Activated CD4-positive, alpha-beta T cell treated with anti-CD3 and anti-CD28 coated beads for 36 hours (primary cell): ENCODE measurements at regions of chr16 and their contacts with region 1.

Region 1: DNA sequence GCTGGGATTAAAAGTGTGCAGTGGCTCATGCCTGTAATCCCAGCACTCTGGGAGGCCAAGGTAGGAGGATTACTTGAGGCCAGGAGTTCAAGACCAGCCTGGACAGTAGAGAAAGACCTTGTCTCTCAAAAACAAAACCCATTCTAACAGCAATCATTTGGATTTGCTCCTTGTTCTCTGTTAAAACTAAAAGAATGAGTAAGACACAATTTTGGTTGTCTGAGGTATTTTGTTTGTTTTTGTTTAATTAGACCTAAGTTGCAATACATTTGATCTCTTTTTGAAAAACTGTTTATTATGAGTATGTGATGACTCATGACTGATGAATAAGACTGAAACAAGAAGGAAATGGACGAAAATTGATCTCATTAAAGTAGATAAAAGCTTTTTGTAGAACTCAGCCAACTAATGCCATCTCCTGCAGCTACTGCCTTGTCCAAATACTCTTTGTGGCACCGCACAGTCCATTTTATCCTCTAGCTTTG is 29.0 kb downstream of the GLG1 start:
- DNase-seq: no peak
- ATAC-seq: peak; percentile 75
- H3K4me3 Mint-ChIP-seq: no peak overlapping the region
- H3K27ac Mint-ChIP-seq: peak overlapping the region; percentile 40
- H3K4me1 Mint-ChIP-seq: peaks cover 76% of the 10 kb centered on the region
- H3K27me3 Mint-ChIP-seq: no peaks in the 10 kb centered on the region

Region 2: GRCh38 chr16:74601126-74601871 is 23.4 kb after region 1 on chr16:
- CTCF ChIA-PET with region 1: interaction called, 3 read pairs
- POLR2A ChIA-PET with region 1: no interaction called
- intact Hi-C with region 1: loop called (anchors 1 to 2 kb)
- DNase-seq: peak; percentile 79
- ATAC-seq: peak; percentile 91
- H3K4me3 Mint-ChIP-seq: peak overlapping the region; percentile 11
- H3K27ac Mint-ChIP-seq: peak overlapping the region; percentile 90
- H3K4me1 Mint-ChIP-seq: peaks cover 66% of the 10 kb centered on the region
- H3K27me3 Mint-ChIP-seq: no peaks in the 10 kb centered on the region

Region 3: DNA sequence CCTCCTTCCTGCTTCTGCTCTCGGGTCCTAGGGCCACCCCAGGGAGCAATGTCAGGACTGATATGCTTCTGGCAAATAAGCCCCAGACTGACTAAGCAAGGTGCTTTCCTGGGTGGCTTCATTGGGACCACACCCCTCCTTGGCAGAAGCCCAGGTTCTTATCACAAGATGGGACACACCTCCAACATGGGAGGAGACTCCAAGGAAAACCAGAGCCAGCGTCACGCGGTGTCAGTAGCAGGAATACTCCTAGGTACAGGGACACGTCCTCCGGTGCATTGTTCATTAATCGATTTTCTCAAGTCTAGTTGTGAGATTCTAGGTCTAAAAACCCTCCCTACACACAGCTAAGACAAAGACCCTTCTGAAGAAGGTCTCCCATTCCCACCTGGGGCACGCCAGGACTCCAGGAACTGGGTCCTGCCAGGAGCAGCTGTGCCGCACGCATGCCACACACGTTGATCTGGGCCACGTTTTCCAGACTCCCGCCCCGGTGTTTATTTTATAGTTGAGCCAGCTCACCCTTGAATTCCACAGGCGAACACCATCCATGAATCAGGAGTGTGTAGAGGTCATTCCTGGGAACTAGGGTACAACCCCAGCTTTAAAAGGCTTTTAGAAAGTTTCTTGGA is 165.9 kb after region 1 on chr16:
- CTCF ChIA-PET with region 1: no interaction called
- POLR2A ChIA-PET with region 1: no interaction called
- intact Hi-C with region 1: no loop called
- DNase-seq: no peak
- ATAC-seq: no peak
- H3K4me3 Mint-ChIP-seq: no peak overlapping the region
- H3K27ac Mint-ChIP-seq: no peak overlapping the region
- H3K4me1 Mint-ChIP-seq: no peaks in the 10 kb centered on the region
- H3K27me3 Mint-ChIP-seq: peaks cover 2% of the 10 kb centered on the region

Region 4: GRCh38 chr16:74756203-74756602 is 178.3 kb after region 1 on chr16:
- CTCF ChIA-PET with region 1: no interaction called
- POLR2A ChIA-PET with region 1: no interaction called
- intact Hi-C with region 1: no loop called
- DNase-seq: no peak
- ATAC-seq: no peak
- H3K4me3 Mint-ChIP-seq: no peak overlapping the region
- H3K27ac Mint-ChIP-seq: no peak overlapping the region
- H3K4me1 Mint-ChIP-seq: no peaks in the 10 kb centered on the region
- H3K27me3 Mint-ChIP-seq: no peaks in the 10 kb centered on the region

Region 5: DNA sequence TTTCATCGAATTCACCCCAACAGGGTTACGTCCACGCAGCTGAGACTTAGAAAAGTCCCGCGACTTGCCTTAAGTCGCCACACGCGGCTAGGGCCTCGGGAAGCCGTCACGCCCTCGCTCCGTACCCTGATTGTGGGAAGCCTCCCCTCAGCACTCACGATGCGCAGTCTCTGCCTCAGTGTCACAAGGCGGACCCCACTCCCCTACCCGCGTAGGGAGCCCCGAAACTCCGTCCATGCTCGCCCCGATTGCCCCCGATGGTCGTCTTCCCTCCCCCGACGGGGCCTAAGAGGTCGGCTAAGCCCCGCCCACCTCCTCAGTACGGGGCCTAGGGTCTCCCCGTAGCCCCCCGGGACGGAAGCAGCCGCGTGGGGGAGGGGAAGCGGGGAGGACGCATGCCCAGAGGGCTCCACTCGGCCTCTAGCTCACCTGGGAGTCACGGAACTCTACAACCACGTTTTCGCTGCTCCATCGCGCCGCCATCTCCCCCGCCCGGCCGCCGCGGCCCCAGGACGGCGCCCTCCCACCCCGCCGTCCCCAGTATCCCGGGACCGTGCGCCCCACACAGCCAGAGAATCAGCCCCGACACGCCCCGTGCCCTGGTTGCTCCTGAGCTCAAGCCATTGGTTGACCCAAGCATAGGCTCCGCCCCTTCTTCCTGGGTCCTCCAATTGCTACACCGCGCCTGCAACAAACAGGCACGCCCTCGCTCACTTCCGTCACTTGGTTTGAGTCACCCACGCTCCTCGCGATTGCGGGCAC is 406.8 kb after region 1 on chr16 and contains the start of gene WDR59:
- CTCF ChIA-PET with region 1: no interaction called
- POLR2A ChIA-PET with region 1: no interaction called
- intact Hi-C with region 1: no loop called
- DNase-seq: peak; percentile 100
- ATAC-seq: peak; percentile 100
- H3K4me3 Mint-ChIP-seq: peak within 1 kb of the TSS; percentile 85
- H3K27ac Mint-ChIP-seq: peak within 1 kb of the TSS; percentile 85
- H3K4me1 Mint-ChIP-seq: peaks cover 17% of the 10 kb centered on the region
- H3K27me3 Mint-ChIP-seq: no peaks in the 10 kb centered on the region
- total RNA-seq, gene WDR59: 69.2 to 91.4 TPM

Region 6: GRCh38 chr16:76052725-76053124 is 1474.8 kb after region 1 on chr16:
- CTCF ChIA-PET with region 1: no interaction called
- POLR2A ChIA-PET with region 1: no interaction called
- intact Hi-C with region 1: no loop called
- DNase-seq: no peak
- ATAC-seq: no peak
- H3K4me3 Mint-ChIP-seq: no peak overlapping the region
- H3K27ac Mint-ChIP-seq: no peak overlapping the region
- H3K4me1 Mint-ChIP-seq: no peaks in the 10 kb centered on the region
- H3K27me3 Mint-ChIP-seq: no peaks in the 10 kb centered on the region